Activated CD8-positive, alpha-beta memory T cell treated with anti-CD3 and anti-CD28 coated beads, Interleukin-2, amount 10 ng/mL, durations not matched to agents 7 days and 5 days (primary cell): ENCODE measurements at regions of chr2 and their contacts with region 1.

Region 1: GRCh38 chr2:47323009-47323821 is 79.7 kb upstream of the MSH2 start:
- DNase-seq: peak; percentile 75
- ATAC-seq: peak; percentile 98
- H3K4me3 Mint-ChIP-seq: no peak overlapping the region
- H3K27ac Mint-ChIP-seq: no peak overlapping the region
- H3K4me1 Mint-ChIP-seq: no peaks in the 10 kb centered on the region
- H3K27me3 Mint-ChIP-seq: peaks cover 18% of the 10 kb centered on the region

Region 2: GRCh38 chr2:47070920-47071824 is 252.0 kb before region 1 on chr2:
- CTCF ChIA-PET with region 1: no interaction called
- DNase-seq: peak; percentile 69
- ATAC-seq: peak; percentile 54
- H3K4me3 Mint-ChIP-seq: no peak overlapping the region
- H3K27ac Mint-ChIP-seq: peak overlapping the region; percentile 63
- H3K4me1 Mint-ChIP-seq: peaks cover 30% of the 10 kb centered on the region
- H3K27me3 Mint-ChIP-seq: no peaks in the 10 kb centered on the region

Region 3: DNA sequence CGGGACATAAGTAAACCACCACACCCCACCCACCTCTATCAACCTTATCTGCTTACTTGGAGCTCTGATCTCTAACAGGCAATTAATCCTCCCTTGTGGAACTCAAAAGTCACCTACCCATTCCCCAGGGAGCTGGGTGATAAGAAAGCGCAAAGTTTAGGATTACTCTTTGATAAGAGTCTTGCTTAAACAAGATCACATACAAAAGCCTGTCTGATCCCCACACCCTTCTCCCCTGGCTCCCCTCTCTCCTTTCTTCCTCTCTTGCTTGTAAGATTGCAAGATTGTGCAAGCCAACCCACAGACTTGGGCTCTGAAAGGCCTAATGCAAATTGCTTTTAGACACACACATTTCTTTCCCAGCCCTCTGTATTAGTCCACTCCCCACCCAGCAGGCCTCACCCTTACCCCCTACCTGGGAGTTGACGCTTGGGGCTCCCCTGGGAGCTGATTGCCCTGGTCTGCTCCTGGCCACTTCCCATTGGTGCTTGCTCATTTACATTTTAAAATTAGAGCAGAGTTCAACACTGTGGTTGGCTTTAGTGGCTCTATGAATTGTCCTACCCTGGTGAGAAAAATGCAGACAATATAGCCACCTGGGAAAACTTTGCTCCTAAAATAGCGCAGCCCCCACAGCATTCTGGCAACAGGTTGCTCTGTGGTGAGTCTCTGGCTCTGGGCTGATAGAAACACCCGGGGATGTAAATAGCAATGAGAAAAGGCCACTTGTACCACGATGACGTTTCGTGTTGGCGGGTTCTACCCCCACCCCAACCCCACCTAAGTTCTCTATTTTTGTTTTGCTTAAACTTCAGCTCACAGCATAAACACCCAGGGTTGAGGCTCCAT is 13.0 kb before region 1 on chr2:
- CTCF ChIA-PET with region 1: interaction called, 16 read pairs
- DNase-seq: no peak
- ATAC-seq: no peak
- H3K4me3 Mint-ChIP-seq: no peak overlapping the region
- H3K27ac Mint-ChIP-seq: no peak overlapping the region
- H3K4me1 Mint-ChIP-seq: no peaks in the 10 kb centered on the region
- H3K27me3 Mint-ChIP-seq: peaks cover 28% of the 10 kb centered on the region

Region 4: DNA sequence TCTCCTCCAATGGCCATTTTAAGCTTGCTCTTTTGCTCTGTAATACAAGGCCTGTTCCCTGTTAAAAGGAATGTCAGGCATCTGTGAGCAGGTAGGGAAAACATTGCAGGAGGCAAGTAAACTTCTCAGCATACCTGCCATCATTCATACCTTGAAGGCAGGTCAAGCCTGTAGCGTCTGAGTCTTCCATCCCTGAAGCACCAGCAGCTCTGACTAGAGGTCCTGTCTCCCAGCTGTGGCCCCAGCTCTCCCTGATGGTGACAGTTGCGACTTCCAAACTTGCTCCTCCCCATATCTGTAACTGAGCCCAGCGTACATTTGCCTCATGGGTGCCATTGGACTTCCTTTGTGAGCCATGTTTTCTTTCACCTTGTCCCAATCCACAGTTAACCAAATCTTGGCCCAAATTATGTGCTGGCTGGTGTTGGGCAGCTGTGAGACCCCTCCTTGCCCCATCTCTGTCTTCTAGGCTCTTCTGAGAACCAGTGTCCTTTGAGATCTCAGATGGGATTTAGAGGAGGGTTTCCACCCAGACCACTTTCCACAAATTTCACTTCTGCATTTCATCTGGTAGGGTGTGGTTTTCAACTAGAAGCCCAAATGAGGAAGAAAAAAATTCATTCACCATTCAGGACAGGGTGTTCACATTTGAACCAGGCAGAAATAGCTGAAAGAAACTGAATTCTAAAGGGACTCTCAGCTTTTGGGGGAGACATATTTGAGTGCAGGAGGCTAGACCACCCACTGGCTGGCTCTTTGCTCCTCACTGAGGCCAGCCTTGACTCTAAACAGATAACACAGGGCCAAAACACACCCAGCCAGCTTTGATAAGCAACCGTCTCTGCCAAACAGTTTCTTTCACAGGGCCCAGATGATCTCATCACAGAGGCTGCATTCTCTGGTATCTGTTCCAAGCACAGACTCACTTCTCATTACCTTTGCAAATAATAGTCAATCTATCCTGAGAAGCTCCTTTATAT is 13.3 kb after region 1 on chr2:
- CTCF ChIA-PET with region 1: interaction called, 33 read pairs
- DNase-seq: no peak
- ATAC-seq: no peak
- H3K4me3 Mint-ChIP-seq: no peak overlapping the region
- H3K27ac Mint-ChIP-seq: no peak overlapping the region
- H3K4me1 Mint-ChIP-seq: no peaks in the 10 kb centered on the region
- H3K27me3 Mint-ChIP-seq: peaks cover 15% of the 10 kb centered on the region

Region 5: GRCh38 chr2:47653902-47654789 is 330.9 kb after region 1 on chr2:
- CTCF ChIA-PET with region 1: no interaction called
- DNase-seq: no peak
- ATAC-seq: no peak
- H3K4me3 Mint-ChIP-seq: no peak overlapping the region
- H3K27ac Mint-ChIP-seq: no peak overlapping the region
- H3K4me1 Mint-ChIP-seq: no peaks in the 10 kb centered on the region
- H3K27me3 Mint-ChIP-seq: peaks cover 3% of the 10 kb centered on the region